ENCODE measurements at regions of chr9 and their contacts with region 1.

Region 1: GRCh38 chr9:99807276-99807852 is 14.3 kb upstream of the NR4A3 start:
- DNase-seq: peak; percentile 36 to 66
- ATAC-seq: peak in 6 of 8 donors; percentile 55 to 81 (median 65)
- H3K4me3 ChIP-seq: no peak overlapping the region
- H3K27ac ChIP-seq: no peak overlapping the region
- H3K4me1 ChIP-seq: peaks cover 0 to 17% (median 3%) of the 10 kb centered on the region in 9 donors
- H3K27me3 ChIP-seq: no peaks in the 10 kb centered on the region
- CTCF ChIP-seq: peak; percentile 68 to 91 (median 84)

Region 2: DNA sequence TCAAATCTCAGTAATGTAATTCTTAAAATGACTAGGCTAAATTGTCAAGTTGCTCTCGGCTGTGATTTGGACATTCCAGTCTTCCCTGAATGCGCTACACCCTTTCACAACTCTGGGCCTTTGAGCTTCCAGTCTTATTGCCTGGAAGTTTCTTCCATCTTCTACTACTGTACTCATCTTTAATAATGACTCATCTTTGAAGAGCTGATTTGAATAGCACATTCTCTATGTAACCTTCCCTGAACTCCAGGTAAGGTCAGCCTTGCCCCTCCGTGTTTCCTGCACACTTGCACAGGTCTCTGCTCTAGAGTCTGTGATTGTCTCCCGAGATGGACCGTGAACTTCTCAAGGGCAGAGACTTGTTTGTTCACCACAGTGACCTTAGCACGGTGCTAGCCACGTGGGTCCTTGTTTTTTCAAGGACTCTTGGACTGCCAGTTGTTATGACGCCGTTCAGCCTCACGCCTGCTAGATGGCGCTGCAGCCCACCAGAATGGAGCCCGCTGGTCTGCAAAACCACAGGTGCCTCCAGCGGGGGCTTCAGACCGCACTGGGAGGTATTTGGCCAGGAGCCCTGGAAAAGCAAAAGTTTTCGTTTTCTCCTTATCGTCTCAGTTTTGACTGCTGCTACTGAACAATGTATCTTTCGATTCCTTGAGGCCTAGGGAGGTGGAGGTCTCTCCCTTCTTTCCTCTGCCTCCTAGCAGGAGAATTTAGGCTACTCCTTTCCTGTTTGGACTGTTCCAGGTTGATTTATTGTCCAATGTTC is 540.9 kb before region 1 on chr9:
- intact Hi-C with region 1: loop called in 1 of 10 experiments (anchors 5 kb)
- DNase-seq: peak; percentile 68 to 74
- ATAC-seq: peak; percentile 55 to 92 (median 83)
- H3K4me3 ChIP-seq: no peak overlapping the region
- H3K27ac ChIP-seq: no peak overlapping the region
- H3K4me1 ChIP-seq: peaks cover 0 to 12% (median 6%) of the 10 kb centered on the region in 9 donors
- H3K27me3 ChIP-seq: no peaks in the 10 kb centered on the region
- CTCF ChIP-seq: peak; percentile 69 to 91 (median 88)

Region 3: DNA sequence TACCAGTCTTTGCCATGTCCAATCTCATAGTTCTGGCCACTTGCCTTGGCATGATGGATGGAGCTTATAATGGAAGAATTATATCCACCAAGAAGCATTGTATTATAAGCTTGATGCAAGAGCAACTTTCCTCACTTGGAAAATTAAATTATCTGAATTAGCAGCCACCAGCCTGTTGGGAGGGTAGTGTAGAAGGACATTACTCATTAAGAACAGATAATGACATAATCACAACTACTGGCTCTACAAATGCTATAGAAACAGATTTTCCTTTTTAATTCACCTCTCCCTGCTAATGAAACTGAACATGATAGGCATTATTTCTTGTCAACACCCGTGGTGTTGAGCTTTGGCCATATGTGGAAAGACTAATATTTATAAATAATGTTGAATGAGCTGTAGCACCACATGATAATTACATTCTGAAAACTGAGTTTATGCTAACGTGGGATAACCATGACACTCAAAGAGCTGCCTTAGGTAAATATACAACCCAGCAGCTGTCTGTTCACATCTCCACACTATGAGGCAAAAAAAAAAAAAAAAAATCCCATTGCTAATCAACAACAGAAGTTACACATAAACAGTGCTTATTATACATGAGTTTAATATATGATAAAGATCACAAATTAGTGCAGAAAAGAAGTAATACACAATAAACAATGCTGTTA is 33.8 kb before region 1 on chr9:
- intact Hi-C with region 1: no loop called
- DNase-seq: no peak
- ATAC-seq: no peak
- H3K4me3 ChIP-seq: no peak overlapping the region
- H3K27ac ChIP-seq: no peak overlapping the region
- H3K4me1 ChIP-seq: no peaks in the 10 kb centered on the region
- H3K27me3 ChIP-seq: no peaks in the 10 kb centered on the region
- CTCF ChIP-seq: no peak

Region 4: GRCh38 chr9:99906403-99907207 is 99.2 kb after region 1 on chr9 and contains the start of gene STX17:
- intact Hi-C with region 1: loop called in 1 of 10 experiments (anchors 5 kb)
- DNase-seq: peak; percentile 77 to 86
- ATAC-seq: peak; percentile 96 to 99 (median 97)
- H3K4me3 ChIP-seq: peak within 1 kb of the TSS; percentile 74 to 99 (median 94)
- H3K27ac ChIP-seq: peak within 1 kb of the TSS; percentile 91 to 99 (median 98)
- H3K4me1 ChIP-seq: peaks cover 0 to 26% (median 18%) of the 10 kb centered on the region in 9 donors
- H3K27me3 ChIP-seq: no peaks in the 10 kb centered on the region
- CTCF ChIP-seq: peak in 3 of 9 donors; percentile 6 to 27 (median 21)
- total RNA-seq, gene STX17: 21.4 to 31.1 (median 24.1) TPM

Region 5: GRCh38 chr9:99948896-99949295 is 141.5 kb after region 1 on chr9:
- intact Hi-C with region 1: loop called in 1 of 10 experiments (anchors 10 kb)
- DNase-seq: peak in 1 of 2 donors; percentile 13
- ATAC-seq: peak in 1 of 8 donors; percentile 37
- H3K4me3 ChIP-seq: no peak overlapping the region
- H3K27ac ChIP-seq: peak overlapping the region in 1 of 10 donors; percentile 24
- H3K4me1 ChIP-seq: peaks cover 0 to 11% (median 0%) of the 10 kb centered on the region in 9 donors
- H3K27me3 ChIP-seq: no peaks in the 10 kb centered on the region
- CTCF ChIP-seq: no peak

Region 6: GRCh38 chr9:100011062-100011681 is 203.8 kb after region 1 on chr9:
- intact Hi-C with region 1: loop called in 3 of 10 experiments (anchors 10 kb)
- DNase-seq: no peak
- ATAC-seq: no peak
- H3K4me3 ChIP-seq: no peak overlapping the region
- H3K27ac ChIP-seq: no peak overlapping the region
- H3K4me1 ChIP-seq: no peaks in the 10 kb centered on the region
- H3K27me3 ChIP-seq: no peaks in the 10 kb centered on the region
- CTCF ChIP-seq: peak in 7 of 9 donors; percentile 44 to 64 (median 57)

Region 7: GRCh38 chr9:100216178-100216787 is 408.9 kb after region 1 on chr9:
- intact Hi-C with region 1: loop called in 1 of 10 experiments (anchors 10 kb)
- DNase-seq: peak in 1 of 2 donors; percentile 54
- ATAC-seq: peak in 6 of 8 donors; percentile 48 to 70 (median 58)
- H3K4me3 ChIP-seq: no peak overlapping the region
- H3K27ac ChIP-seq: no peak overlapping the region
- H3K4me1 ChIP-seq: peaks cover 0 to 14% (median 0%) of the 10 kb centered on the region in 9 donors
- H3K27me3 ChIP-seq: no peaks in the 10 kb centered on the region
- CTCF ChIP-seq: peak; percentile 44 to 75 (median 62)

Measured in heart right ventricle (tissue), 16 donors.